Caco-2 (cell line): ENCODE measurements at regions of chr20 and their contacts with region 1.

Region 1: DNA sequence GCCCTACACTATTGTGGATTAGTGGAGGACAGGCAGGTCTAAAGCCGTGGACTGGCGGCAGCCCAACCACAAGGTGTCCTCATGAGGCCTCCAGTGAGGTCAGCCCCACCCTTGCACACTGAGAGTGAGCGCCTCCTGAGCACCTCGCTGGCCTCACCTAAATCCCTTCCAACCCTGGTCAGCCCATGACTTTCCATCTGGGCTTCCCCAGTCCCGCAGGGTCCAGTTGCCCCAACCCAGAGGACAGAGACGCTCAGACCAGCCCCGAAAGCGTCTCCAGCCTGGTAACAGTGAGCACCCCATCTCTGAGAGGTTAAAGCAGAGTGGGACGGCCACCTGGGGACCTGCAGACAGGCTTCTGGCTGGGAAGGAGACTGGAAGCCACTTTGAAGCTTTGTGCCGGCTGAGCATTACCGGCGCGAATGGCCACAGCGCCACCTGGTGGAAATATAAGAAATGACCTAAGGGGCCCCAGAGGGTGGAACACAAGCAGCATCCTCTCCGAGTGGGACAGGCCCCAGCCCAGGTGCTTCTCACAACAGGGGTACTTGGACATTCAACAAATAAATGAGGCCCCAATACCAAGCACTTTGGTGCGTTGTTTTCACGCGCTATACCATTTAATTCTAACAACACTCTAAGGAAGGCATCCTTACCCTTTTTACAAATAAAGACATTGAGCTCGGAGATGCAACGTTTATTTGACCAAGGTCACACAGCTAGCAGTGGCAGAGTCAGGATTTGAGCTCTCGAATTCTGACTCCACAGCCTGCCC is 65.7 kb upstream of the TOP1 start:
- DNase-seq: peak; percentile 91 to 96
- H3K4me3 ChIP-seq: peak overlapping the region; percentile 28
- H3K4me3 Mint-ChIP-seq: peak overlapping the region; percentile 53
- H3K27ac Mint-ChIP-seq: no peak overlapping the region
- H3K4me1 ChIP-seq: peaks cover 11% of the 10 kb centered on the region
- H3K4me1 Mint-ChIP-seq: peaks cover 10% of the 10 kb centered on the region
- H3K27me3 ChIP-seq: no peaks in the 10 kb centered on the region
- H3K27me3 Mint-ChIP-seq: peaks cover 3% of the 10 kb centered on the region
- CTCF ChIP-seq: peak; percentile 96 to 99

Region 2: DNA sequence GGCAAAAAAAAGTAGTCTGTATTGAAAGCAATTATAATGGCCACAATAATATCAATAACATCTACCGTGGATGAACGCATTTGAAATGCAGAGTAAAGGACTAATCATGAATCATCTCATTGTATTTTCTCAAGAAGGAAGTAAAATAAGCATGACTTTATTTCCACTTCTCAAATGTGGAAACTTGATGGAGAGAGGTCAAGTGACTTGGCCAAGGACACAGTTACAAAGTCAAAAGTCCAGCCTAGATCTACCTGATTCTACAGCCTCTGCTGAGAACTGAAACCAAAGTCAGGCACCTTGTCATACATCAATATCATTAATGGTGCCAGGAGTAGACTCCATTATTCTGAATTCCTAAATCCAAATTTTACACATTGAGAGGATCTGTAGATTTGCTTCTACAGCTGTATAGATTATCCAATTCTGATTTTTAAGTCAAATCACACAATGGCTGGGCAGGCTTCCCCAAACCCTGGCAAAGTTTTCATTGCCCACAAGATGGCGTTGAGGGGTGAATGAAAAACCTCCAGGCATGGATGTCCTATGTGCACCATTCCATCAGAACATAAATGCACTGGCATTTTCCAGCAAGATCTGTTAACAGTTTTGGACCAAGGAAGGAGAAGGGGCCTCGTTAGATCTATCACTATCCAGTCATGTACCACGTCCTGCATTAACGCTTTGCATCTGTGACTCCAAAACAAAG is 696.9 kb before region 1 on chr20:
- CTCF ChIA-PET with region 1: no interaction called
- POLR2A ChIA-PET with region 1: no interaction called
- intact Hi-C with region 1: loop called (anchors 5 kb)
- DNase-seq: peak in 1 of 2 experiments; percentile 66
- H3K4me3 ChIP-seq: no peak overlapping the region
- H3K4me3 Mint-ChIP-seq: no peak overlapping the region
- H3K27ac Mint-ChIP-seq: no peak overlapping the region
- H3K4me1 ChIP-seq: no peaks in the 10 kb centered on the region
- H3K4me1 Mint-ChIP-seq: no peaks in the 10 kb centered on the region
- H3K27me3 ChIP-seq: peaks cover 2% of the 10 kb centered on the region
- H3K27me3 Mint-ChIP-seq: peaks cover 21% of the 10 kb centered on the region
- CTCF ChIP-seq: peak; percentile 72 to 81

Region 3: GRCh38 chr20:40754339-40754943 is 208.5 kb before region 1 on chr20:
- CTCF ChIA-PET with region 1: no interaction called
- POLR2A ChIA-PET with region 1: no interaction called
- intact Hi-C with region 1: no loop called
- DNase-seq: peak in 1 of 2 experiments; percentile 32
- H3K4me3 ChIP-seq: no peak overlapping the region
- H3K4me3 Mint-ChIP-seq: no peak overlapping the region
- H3K27ac Mint-ChIP-seq: no peak overlapping the region
- H3K4me1 ChIP-seq: no peaks in the 10 kb centered on the region
- H3K4me1 Mint-ChIP-seq: no peaks in the 10 kb centered on the region
- H3K27me3 ChIP-seq: peaks cover 1% of the 10 kb centered on the region; the same call in 1 of the 2 replicates
- H3K27me3 Mint-ChIP-seq: peaks cover 30% of the 10 kb centered on the region
- CTCF ChIP-seq: no peak

Region 4: DNA sequence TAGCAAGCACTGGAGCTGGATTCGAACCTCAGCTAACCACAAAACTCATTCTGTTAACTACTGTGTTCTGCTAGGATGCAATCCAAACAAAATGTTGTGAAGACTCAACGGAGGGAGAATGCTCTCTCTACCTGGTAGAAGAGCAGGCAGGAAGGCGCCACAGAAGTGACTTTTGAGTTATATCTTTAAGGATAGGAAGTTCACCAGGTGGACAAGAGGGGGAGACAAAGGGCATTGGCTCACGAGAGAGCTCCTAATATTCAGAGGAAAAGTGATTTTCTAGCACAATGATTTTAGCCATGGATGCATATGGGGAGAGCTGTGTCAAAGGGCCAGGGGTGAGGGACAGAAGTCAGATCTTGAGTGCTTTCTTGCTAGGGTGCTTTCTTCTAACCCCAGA is 165.5 kb before region 1 on chr20:
- CTCF ChIA-PET with region 1: interaction called, 60 read pairs
- POLR2A ChIA-PET with region 1: no interaction called
- intact Hi-C with region 1: loop called (anchors 1 kb)
- DNase-seq: peak in 1 of 2 experiments; percentile 71
- H3K4me3 ChIP-seq: no peak overlapping the region
- H3K4me3 Mint-ChIP-seq: no peak overlapping the region
- H3K27ac Mint-ChIP-seq: no peak overlapping the region
- H3K4me1 ChIP-seq: no peaks in the 10 kb centered on the region
- H3K4me1 Mint-ChIP-seq: no peaks in the 10 kb centered on the region
- H3K27me3 ChIP-seq: peaks cover 2% of the 10 kb centered on the region
- H3K27me3 Mint-ChIP-seq: peaks cover 23% of the 10 kb centered on the region
- CTCF ChIP-seq: peak; percentile 92 to 97

Region 5: DNA sequence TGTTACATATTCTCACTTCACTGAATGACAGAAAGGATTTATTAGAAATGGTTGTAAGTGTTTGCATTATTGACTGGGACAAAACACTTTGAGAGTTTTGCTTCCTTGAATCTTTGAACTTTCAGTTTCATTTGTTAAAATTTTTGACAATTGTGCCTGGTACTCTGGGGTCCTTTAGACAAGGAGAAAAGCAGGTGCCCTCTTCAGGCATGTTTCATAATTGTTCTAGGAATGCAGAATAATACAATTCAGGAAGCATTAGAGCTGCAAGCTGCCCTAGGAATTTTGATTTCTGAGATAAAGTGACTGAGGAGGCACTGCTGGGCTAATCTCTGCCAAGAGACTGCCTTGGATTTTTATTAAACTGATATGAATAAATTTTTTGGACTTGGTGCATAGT is 115.4 kb after region 1 on chr20:
- CTCF ChIA-PET with region 1: interaction called, 12 read pairs
- POLR2A ChIA-PET with region 1: no interaction called
- intact Hi-C with region 1: loop called (anchors 1 kb)
- DNase-seq: peak in 1 of 2 experiments; percentile 80
- H3K4me3 ChIP-seq: no peak overlapping the region
- H3K4me3 Mint-ChIP-seq: no peak overlapping the region
- H3K27ac Mint-ChIP-seq: peak overlapping the region; percentile 18
- H3K4me1 ChIP-seq: peaks cover 17% of the 10 kb centered on the region
- H3K4me1 Mint-ChIP-seq: peaks cover 29% of the 10 kb centered on the region
- H3K27me3 ChIP-seq: no peaks in the 10 kb centered on the region
- H3K27me3 Mint-ChIP-seq: no peaks in the 10 kb centered on the region
- CTCF ChIP-seq: peak; percentile 85 to 86

Region 6: DNA sequence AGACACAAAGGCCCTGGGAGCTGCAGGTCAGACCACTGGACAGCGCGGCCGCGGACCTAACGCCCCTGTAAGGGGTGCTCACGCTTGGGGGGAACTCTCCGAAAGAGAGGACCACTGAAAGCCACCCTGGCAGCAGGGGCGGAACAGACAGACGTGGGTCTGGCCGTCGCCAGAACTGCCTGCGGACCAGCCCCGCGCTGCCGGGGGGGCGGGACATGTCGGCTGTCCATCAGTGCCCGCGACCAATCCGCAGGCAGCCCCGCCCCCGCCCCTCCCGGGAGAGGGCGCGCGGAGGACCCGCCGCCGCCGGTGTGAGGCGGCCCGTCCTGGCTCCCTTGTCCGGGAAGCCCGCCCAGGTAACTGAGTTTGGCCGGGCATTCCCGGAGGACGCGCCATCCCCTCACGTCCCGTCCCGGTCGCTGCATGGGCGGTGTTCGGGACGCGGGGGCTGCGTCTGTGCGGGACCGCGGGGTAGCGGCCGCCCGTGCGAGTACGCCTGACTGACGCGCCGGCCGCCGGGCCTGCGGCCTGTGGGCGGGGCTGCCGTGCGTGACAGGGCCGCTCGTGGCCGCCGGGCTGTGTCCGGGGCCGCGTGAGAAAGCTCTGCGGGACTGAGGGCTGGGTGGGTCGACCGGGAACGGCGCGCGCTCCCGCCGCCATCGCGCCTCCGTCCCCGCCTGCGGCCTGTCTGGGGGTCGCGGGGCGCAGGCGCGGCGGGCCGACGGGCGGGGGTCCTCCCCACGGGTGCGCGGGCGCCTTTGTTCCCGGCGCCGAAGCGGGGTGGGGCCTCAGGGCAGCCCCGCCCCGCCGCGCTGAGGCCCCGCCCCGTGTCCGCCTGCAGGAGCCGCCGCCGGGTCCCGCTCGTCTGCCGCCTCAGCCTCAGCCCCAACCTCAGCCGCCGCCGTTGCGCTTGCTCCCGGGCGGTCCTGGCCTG is 174.0 kb after region 1 on chr20 and contains the start of gene PLCG1:
- CTCF ChIA-PET with region 1: interaction called, 12 read pairs
- POLR2A ChIA-PET with region 1: no interaction called
- intact Hi-C with region 1: loop called (anchors 1 kb)
- DNase-seq: peak; percentile 93 to 99
- H3K4me3 ChIP-seq: peak within 1 kb of the TSS; percentile 96
- H3K4me3 Mint-ChIP-seq: peak within 1 kb of the TSS; percentile 83
- H3K27ac Mint-ChIP-seq: peak within 1 kb of the TSS; percentile 82
- H3K4me1 ChIP-seq: peaks cover 17% of the 10 kb centered on the region
- H3K4me1 Mint-ChIP-seq: peaks cover 21% of the 10 kb centered on the region
- H3K27me3 ChIP-seq: no peaks in the 10 kb centered on the region
- H3K27me3 Mint-ChIP-seq: no peaks in the 10 kb centered on the region
- CTCF ChIP-seq: no peak
- total RNA-seq, gene PLCG1: 196 and 205 TPM in 2 replicates

Region 7: GRCh38 chr20:41249406-41250281 is 286.7 kb after region 1 on chr20:
- CTCF ChIA-PET with region 1: interaction called, 19 read pairs
- POLR2A ChIA-PET with region 1: no interaction called
- intact Hi-C with region 1: no loop called
- DNase-seq: peak; percentile 71 to 73
- H3K4me3 ChIP-seq: no peak overlapping the region
- H3K4me3 Mint-ChIP-seq: no peak overlapping the region
- H3K27ac Mint-ChIP-seq: no peak overlapping the region
- H3K4me1 ChIP-seq: no peaks in the 10 kb centered on the region
- H3K4me1 Mint-ChIP-seq: no peaks in the 10 kb centered on the region
- H3K27me3 ChIP-seq: no peaks in the 10 kb centered on the region
- H3K27me3 Mint-ChIP-seq: no peaks in the 10 kb centered on the region
- CTCF ChIP-seq: peak; percentile 50 to 57